Activated CD8-positive, alpha-beta T cell treated with anti-CD3 and anti-CD28 coated beads for 36 hours (primary cell): ENCODE measurements at regions of chr5 and their contacts with region 1.

Region 1: DNA sequence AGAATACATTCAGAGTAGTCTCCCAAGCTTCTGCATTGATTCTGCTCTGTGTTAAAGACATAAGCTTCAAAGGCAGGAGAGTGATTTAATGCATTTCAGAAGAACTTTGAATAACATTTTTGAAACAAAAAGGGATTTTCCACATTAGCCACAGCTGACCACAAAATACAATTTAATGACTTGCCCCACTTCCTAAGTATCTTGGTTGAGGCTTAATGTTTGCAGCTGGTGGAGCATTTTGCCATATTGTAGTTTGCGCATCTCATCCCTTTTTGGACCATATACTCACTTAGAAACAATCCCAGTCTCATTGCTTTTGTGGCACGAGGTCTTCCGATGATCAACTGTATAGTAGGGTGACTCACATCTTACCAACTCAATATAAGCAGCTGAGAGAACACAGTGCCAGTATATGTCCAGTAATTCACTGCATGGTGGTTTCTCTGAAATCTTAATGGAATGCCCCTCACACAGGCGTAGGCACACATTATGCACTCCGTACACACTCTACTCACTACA is 455.8 kb upstream of the PTGER4 start:
- DNase-seq: peak; percentile 65
- ATAC-seq: peak; percentile 90
- H3K4me3 Mint-ChIP-seq: peak overlapping the region; percentile 14
- H3K27ac Mint-ChIP-seq: peak overlapping the region; percentile 82
- H3K4me1 Mint-ChIP-seq: peaks cover 51% of the 10 kb centered on the region
- H3K27me3 Mint-ChIP-seq: peaks cover 1% of the 10 kb centered on the region
- CTCF ChIP-seq: no peak

Region 2: GRCh38 chr5:39675676-39676075 is 548.3 kb before region 1 on chr5:
- CTCF ChIA-PET with region 1: no interaction called
- POLR2A ChIA-PET with region 1: no interaction called
- intact Hi-C with region 1: no loop called
- DNase-seq: no peak
- ATAC-seq: no peak
- H3K4me3 Mint-ChIP-seq: no peak overlapping the region
- H3K27ac Mint-ChIP-seq: no peak overlapping the region
- H3K4me1 Mint-ChIP-seq: no peaks in the 10 kb centered on the region
- H3K27me3 Mint-ChIP-seq: peaks cover 11% of the 10 kb centered on the region
- CTCF ChIP-seq: no peak

Region 3: GRCh38 chr5:39928709-39929108 is 295.2 kb before region 1 on chr5:
- CTCF ChIA-PET with region 1: no interaction called
- POLR2A ChIA-PET with region 1: no interaction called
- intact Hi-C with region 1: no loop called
- DNase-seq: no peak
- ATAC-seq: no peak
- H3K4me3 Mint-ChIP-seq: no peak overlapping the region
- H3K27ac Mint-ChIP-seq: no peak overlapping the region
- H3K4me1 Mint-ChIP-seq: peaks cover 2% of the 10 kb centered on the region
- H3K27me3 Mint-ChIP-seq: peaks cover 32% of the 10 kb centered on the region
- CTCF ChIP-seq: no peak

Region 4: GRCh38 chr5:40240111-40240510 is 16.2 kb after region 1 on chr5:
- CTCF ChIA-PET with region 1: interaction called, 3 read pairs
- POLR2A ChIA-PET with region 1: interaction called, 3 read pairs
- intact Hi-C with region 1: loop called (anchors 1 kb)
- DNase-seq: peak; percentile 57
- ATAC-seq: peak; percentile 67
- H3K4me3 Mint-ChIP-seq: no peak overlapping the region
- H3K27ac Mint-ChIP-seq: no peak overlapping the region
- H3K4me1 Mint-ChIP-seq: peaks cover 16% of the 10 kb centered on the region
- H3K27me3 Mint-ChIP-seq: no peaks in the 10 kb centered on the region
- CTCF ChIP-seq: no peak

Region 5: GRCh38 chr5:40333459-40334244 is 109.7 kb after region 1 on chr5:
- CTCF ChIA-PET with region 1: interaction called, 3 read pairs
- POLR2A ChIA-PET with region 1: no interaction called
- intact Hi-C with region 1: loop called (anchors 5 kb)
- DNase-seq: peak; percentile 27
- ATAC-seq: peak; percentile 98
- H3K4me3 Mint-ChIP-seq: no peak overlapping the region
- H3K27ac Mint-ChIP-seq: no peak overlapping the region
- H3K4me1 Mint-ChIP-seq: peaks cover 27% of the 10 kb centered on the region
- H3K27me3 Mint-ChIP-seq: no peaks in the 10 kb centered on the region
- CTCF ChIP-seq: no peak

Region 6: DNA sequence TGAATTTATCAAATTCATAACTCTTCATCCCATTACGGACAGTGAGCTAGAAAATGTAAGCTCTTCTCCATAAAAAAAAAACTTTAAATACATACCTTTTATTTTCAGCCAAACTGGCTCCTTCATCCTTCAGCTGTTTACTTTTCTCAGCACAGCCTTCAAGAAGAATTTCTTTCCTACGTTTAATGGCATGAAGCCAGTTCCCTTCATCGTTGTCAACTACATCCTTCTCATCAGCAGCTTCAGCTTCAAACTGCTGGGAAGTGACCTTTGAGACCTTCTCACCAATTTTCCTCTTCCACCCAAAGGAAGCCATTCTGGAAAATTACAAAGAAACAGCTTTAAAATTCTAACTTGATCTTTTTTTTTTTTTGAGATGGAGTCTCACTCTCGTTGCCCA is 522.8 kb after region 1 on chr5:
- CTCF ChIA-PET with region 1: no interaction called
- POLR2A ChIA-PET with region 1: no interaction called
- intact Hi-C with region 1: no loop called
- DNase-seq: no peak
- ATAC-seq: no peak
- H3K4me3 Mint-ChIP-seq: no peak overlapping the region
- H3K27ac Mint-ChIP-seq: no peak overlapping the region
- H3K4me1 Mint-ChIP-seq: peaks cover 28% of the 10 kb centered on the region
- H3K27me3 Mint-ChIP-seq: no peaks in the 10 kb centered on the region
- CTCF ChIP-seq: no peak